ENCODE measurements at regions of chr19 and their contacts with region 1.

Region 1: DNA sequence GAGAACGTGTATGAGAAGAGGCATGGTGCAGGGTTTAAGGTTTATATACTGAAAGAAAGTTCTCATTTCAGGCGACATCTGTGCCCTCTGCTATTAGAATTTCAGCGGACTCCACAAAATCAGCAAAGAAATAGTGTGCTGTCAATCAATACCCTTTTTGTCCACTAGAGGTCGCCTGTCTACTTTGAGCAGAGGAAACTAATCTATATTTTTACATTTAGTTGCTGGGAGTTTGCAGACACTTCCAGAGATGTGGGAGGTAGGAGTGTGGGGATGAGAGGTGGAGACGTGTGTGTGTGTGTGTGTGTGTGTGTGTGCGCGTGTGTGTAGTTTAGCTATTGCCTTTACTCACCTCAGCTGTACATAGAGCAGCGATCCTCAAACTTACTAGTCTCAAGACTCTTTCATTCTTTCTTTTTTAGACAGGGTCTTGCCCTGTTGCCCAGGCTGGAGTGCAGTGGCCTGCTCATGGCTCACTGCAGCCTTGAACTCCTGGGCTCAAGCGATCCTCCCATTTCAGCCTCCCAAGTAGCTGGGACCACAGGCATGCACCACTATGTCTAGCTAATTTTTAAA is 9.7 kb downstream of the INAFM1 start:
- H3K4me3 ChIP-seq: no peak overlapping the region
- H3K27ac ChIP-seq: no peak overlapping the region
- H3K4me1 ChIP-seq: peaks cover 6% of the 10 kb centered on the region; the same call in 1 of the 2 replicates
- CTCF ChIP-seq: peak; percentile 66

Region 2: DNA sequence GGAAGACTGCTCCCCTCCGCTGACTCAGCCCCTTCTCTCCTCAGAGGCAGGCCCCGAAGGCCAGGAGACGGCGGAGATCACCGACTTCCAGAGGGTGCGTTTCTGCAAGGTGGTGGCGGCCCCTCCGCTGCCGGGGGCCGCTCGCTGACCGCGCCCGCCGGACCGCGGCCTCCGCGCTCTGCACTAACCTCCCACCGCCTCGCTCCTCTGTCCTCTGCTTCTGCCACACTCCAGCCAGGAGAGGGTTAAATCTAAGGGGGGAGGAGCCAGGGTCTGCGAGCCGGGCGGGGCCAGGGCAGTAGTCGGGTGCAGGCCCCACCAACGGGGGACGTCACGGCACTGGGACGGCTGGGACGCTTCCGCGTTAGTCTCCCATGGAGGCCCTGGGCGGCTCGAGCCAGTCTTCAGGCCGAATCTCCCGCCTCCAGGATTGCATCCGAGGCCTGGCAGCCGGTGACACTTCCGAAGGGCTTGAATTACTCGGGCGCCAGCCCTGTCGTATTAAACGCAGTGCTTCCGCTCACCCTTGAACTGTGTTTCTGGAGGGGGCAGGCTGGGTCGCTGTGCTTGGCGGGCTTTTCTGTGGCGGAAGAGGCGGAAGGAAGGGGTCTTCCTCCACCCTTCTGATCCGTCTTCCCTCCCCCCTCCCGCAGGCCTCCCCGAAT is 11.0 kb before region 1 on chr19:
- CTCF ChIA-PET with region 1: interaction called, 20 read pairs
- POLR2A ChIA-PET with region 1: interaction called, 4 read pairs
- H3K4me3 ChIP-seq: peak overlapping the region; percentile 58
- H3K27ac ChIP-seq: peak overlapping the region; percentile 97
- H3K4me1 ChIP-seq: peaks cover 11% of the 10 kb centered on the region
- CTCF ChIP-seq: no peak

Region 3: GRCh38 chr19:47296036-47296435 is 11.6 kb after region 1 on chr19:
- CTCF ChIA-PET with region 1: interaction called, 35 read pairs
- POLR2A ChIA-PET with region 1: interaction called, 4 read pairs
- H3K4me3 ChIP-seq: no peak overlapping the region
- H3K27ac ChIP-seq: no peak overlapping the region
- H3K4me1 ChIP-seq: no peaks in the 10 kb centered on the region
- CTCF ChIP-seq: peak; percentile 70